Activated naive CD4-positive, alpha-beta T cell treated with anti-CD3 and anti-CD28 coated beads for 36 hours (primary cell): ENCODE measurements at regions of chr3 and their contacts with region 1.

Region 1: DNA sequence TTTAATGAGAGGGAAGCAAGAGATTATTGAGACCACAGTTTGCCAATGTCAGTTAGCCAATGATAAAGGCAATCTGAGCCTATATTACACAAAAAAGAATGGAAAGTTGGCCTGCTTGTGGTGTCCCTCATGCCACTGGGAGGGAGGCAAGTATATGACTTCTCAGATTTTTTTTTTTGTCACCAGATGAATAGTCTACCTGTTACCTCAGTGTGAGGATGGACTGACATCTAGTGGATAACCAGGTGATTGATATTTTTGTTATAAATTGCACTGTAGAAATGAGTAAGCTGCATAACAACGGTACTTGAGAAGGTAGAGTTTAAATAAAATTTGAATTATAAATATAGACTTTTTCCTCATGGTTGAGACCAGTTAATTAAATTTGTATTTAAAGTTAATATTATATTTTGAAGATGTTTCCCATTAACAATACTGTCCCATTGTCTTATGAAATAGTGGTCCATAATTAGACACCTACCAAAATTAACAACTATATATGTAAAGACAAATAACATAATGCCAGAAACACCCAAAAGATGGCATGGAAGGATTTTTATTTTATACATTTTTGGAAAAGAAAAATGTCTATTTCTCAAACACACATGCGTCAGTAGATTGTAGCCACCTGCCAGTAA is 237.8 kb upstream of the GADL1 start:
- DNase-seq: no peak
- H3K4me3 Mint-ChIP-seq: no peak overlapping the region
- H3K27ac Mint-ChIP-seq: no peak overlapping the region
- H3K4me1 Mint-ChIP-seq: no peaks in the 10 kb centered on the region
- H3K27me3 Mint-ChIP-seq: no peaks in the 10 kb centered on the region

Region 2: GRCh38 chr3:30934208-30934550 is 198.1 kb before region 1 on chr3:
- CTCF ChIA-PET with region 1: interaction called, 7 read pairs
- intact Hi-C with region 1: loop called (anchors 2 kb)
- DNase-seq: peak; percentile 17
- H3K4me3 Mint-ChIP-seq: no peak overlapping the region
- H3K27ac Mint-ChIP-seq: no peak overlapping the region
- H3K4me1 Mint-ChIP-seq: peaks cover 8% of the 10 kb centered on the region
- H3K27me3 Mint-ChIP-seq: no peaks in the 10 kb centered on the region

Region 3: GRCh38 chr3:30970183-30970582 is 162.1 kb before region 1 on chr3:
- CTCF ChIA-PET with region 1: no interaction called
- intact Hi-C with region 1: loop called (anchors 1 kb)
- DNase-seq: no peak
- H3K4me3 Mint-ChIP-seq: no peak overlapping the region
- H3K27ac Mint-ChIP-seq: no peak overlapping the region
- H3K4me1 Mint-ChIP-seq: no peaks in the 10 kb centered on the region
- H3K27me3 Mint-ChIP-seq: peaks cover 4% of the 10 kb centered on the region

Region 4: GRCh38 chr3:31196881-31197364 is 64.7 kb after region 1 on chr3:
- CTCF ChIA-PET with region 1: no interaction called
- intact Hi-C with region 1: no loop called
- DNase-seq: no peak
- H3K4me3 Mint-ChIP-seq: no peak overlapping the region
- H3K27ac Mint-ChIP-seq: no peak overlapping the region
- H3K4me1 Mint-ChIP-seq: peaks cover 13% of the 10 kb centered on the region
- H3K27me3 Mint-ChIP-seq: no peaks in the 10 kb centered on the region